BJ (cell line): ENCODE measurements at regions of chr15 and their contacts with region 1.

Region 1: DNA sequence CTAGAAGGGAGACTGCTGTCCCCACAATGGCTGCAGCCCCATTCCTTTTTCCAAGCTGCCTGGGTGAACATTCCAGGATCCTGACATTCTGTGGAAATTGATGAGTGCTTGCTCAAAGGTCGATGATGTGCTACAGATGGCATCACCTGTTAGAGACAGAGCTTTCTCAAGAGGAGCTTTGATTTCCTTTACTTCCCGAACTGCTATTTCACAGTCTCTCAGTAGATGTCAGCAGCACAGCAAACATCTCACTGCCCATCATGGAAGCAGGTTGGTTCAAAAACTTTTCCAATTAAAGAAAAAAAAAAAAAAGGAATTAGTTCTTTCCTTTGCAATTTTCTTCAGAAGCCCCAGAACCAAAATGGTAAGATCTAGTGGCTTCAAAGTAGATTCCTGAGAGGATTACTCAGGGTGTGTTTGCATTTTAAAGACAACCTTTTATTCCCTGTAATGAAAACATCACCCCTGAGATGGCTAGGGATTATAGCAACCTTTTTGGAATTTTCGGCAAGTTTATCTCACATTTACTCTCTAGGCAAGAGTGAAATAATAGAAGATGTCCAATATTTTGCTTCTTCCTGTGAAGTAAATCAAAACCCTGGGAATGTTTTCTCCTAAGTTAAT is 44.8 kb downstream of the POLR2M start:
- DNase-seq: no peak
- H3K4me3 ChIP-seq: no peak overlapping the region
- H3K27me3 ChIP-seq: no peaks in the 10 kb centered on the region
- CTCF ChIP-seq: peak; percentile 77

Region 2: GRCh38 chr15:57732526-57733331 is 18.6 kb before region 1 on chr15:
- CTCF ChIA-PET with region 1: interaction called, 155 read pairs
- POLR2A ChIA-PET with region 1: no interaction called
- DNase-seq: no peak
- H3K4me3 ChIP-seq: no peak overlapping the region
- H3K27me3 ChIP-seq: no peaks in the 10 kb centered on the region
- CTCF ChIP-seq: peak; percentile 81

Region 3: DNA sequence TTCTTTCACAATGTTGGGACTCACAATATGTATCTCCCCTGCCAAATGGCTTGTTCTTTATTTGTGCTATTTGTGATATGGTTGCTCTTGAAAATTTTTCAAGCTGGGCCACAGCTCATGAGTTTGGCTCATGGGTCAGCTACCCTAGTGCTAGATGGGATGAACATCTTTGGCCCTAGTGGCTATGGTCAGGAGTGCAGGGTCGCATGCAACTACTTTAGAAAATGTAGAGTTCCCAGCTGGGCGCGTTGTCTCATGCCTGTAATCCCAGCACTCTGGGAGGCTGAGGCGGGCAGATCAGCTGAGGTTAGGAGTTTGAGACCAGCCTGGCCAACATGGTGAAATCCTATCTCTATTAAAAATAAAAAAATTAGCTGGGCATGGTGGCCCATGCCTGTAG is 11.0 kb after region 1 on chr15:
- CTCF ChIA-PET with region 1: interaction called, 15 read pairs
- POLR2A ChIA-PET with region 1: no interaction called
- DNase-seq: no peak
- H3K4me3 ChIP-seq: no peak overlapping the region
- H3K27me3 ChIP-seq: no peaks in the 10 kb centered on the region
- CTCF ChIP-seq: 0 out of 2 replicates have a peak, but pooled peaks have one; percentile 10

Region 4: GRCh38 chr15:57784081-57784511 is 32.8 kb after region 1 on chr15:
- CTCF ChIA-PET with region 1: interaction called, 11 read pairs
- POLR2A ChIA-PET with region 1: no interaction called
- DNase-seq: peak; percentile 69
- H3K4me3 ChIP-seq: no peak overlapping the region
- H3K27me3 ChIP-seq: no peaks in the 10 kb centered on the region
- CTCF ChIP-seq: no peak

Region 5: DNA sequence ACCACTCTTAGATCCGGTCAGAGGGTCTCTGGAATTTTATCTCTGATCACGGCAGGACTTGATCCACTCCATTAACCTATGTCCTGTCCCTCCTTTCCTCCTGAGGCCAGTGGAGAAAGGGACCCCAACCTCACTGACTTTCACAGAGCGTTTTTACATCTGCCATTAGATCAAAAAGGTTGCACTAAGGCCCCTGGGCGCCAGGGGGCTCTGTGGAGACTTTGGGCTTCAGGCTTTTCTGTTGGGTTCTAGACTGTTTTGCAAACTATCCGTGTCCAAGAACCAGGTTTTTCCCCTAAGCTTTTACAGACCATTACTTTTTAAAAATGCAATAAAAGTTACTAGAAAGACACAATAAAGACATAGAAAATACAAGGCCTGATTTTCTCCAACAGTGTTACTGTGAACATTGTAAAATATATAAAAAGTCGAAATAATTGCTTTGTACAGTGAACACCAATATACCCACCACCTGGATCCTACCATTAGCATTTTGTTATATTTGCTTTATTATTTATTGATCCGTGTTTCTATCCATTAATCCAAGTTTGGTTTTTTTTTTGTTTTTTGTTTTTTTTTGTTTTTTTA is 115.0 kb after region 1 on chr15:
- CTCF ChIA-PET with region 1: interaction called, 230 read pairs
- POLR2A ChIA-PET with region 1: no interaction called
- DNase-seq: no peak
- H3K4me3 ChIP-seq: no peak overlapping the region
- H3K27me3 ChIP-seq: no peaks in the 10 kb centered on the region
- CTCF ChIP-seq: peak; percentile 84

Region 6: GRCh38 chr15:58086491-58086890 is 335.2 kb after region 1 on chr15:
- CTCF ChIA-PET with region 1: no interaction called
- POLR2A ChIA-PET with region 1: no interaction called
- DNase-seq: no peak
- H3K4me3 ChIP-seq: no peak overlapping the region
- H3K27me3 ChIP-seq: no peaks in the 10 kb centered on the region
- CTCF ChIP-seq: no peak